ENCODE measurements at regions of chr3 and their contacts with region 1.

Region 1: DNA sequence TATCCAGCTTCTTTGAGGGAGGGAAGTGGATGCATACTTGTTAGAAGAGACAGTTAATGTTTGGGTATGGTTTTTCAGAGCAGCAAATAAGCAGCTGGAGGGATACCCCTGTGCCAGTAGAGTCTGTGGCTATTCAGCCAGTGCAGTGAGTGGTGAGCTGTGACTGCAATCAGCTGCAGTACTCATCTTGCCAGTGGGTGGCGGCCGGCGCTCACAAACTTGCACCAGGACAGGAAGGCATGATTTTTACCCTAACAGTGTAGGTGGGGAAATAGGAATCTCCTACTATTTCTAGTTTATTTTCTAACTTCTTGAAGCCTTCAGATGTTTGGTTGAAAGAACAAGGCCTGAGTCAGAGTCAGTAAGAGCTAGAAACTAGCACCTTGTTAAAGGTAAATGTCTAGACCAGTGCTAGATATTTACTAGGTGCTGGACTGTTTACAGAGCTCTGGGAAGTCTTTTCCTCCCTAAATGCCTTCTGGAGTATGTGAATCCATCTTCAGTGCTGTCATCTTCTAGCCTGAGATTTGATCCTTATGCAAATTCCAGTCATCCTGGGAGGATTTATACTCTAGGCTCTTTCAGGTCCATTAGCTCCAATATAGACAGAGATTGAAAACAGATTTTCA is 23.6 kb downstream of the TIMP4 start:
- DNase-seq: peak; percentile 44
- H3K4me3 Mint-ChIP-seq: no peak overlapping the region
- H3K27ac Mint-ChIP-seq: no peak overlapping the region
- H3K4me1 Mint-ChIP-seq: peaks cover 8% of the 10 kb centered on the region
- H3K27me3 Mint-ChIP-seq: peaks cover 30% of the 10 kb centered on the region

Region 2: GRCh38 chr3:12175844-12176453 is 40.8 kb after region 1 on chr3:
- intact Hi-C with region 1: loop called (anchors 1 kb)
- DNase-seq: no peak
- H3K4me3 Mint-ChIP-seq: no peak overlapping the region
- H3K27ac Mint-ChIP-seq: no peak overlapping the region
- H3K4me1 Mint-ChIP-seq: peaks cover 21% of the 10 kb centered on the region
- H3K27me3 Mint-ChIP-seq: no peaks in the 10 kb centered on the region

Region 3: GRCh38 chr3:12287727-12288191 is 152.6 kb after region 1 on chr3:
- intact Hi-C with region 1: loop called (anchors 1 kb)
- DNase-seq: no peak
- H3K4me3 Mint-ChIP-seq: peak overlapping the region; percentile 76
- H3K27ac Mint-ChIP-seq: peak overlapping the region; percentile 42
- H3K4me1 Mint-ChIP-seq: peaks cover 18% of the 10 kb centered on the region
- H3K27me3 Mint-ChIP-seq: peaks cover 33% of the 10 kb centered on the region

Region 4: DNA sequence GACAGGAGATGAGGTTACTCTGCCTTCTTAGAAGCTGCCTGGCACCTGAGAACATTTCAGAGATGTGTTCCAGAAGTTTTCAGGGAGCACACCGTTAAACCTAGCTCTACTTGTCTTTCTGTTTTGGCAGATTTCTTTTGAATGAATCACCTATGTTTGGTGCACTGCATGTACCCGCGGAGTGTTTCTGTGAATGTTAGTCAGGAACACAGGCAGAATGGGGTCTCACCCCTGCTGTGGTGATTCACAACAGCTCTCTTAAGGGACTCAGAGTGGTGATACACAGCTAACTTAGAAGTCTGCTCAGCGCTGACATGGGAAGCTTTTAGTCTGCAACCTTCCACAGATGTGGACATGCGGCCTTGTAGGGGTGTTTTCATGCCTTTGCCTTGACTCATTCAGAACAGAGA is 373.2 kb after region 1 on chr3:
- intact Hi-C with region 1: no loop called
- DNase-seq: no peak
- H3K4me3 Mint-ChIP-seq: no peak overlapping the region
- H3K27ac Mint-ChIP-seq: no peak overlapping the region
- H3K4me1 Mint-ChIP-seq: no peaks in the 10 kb centered on the region
- H3K27me3 Mint-ChIP-seq: no peaks in the 10 kb centered on the region

Region 5: DNA sequence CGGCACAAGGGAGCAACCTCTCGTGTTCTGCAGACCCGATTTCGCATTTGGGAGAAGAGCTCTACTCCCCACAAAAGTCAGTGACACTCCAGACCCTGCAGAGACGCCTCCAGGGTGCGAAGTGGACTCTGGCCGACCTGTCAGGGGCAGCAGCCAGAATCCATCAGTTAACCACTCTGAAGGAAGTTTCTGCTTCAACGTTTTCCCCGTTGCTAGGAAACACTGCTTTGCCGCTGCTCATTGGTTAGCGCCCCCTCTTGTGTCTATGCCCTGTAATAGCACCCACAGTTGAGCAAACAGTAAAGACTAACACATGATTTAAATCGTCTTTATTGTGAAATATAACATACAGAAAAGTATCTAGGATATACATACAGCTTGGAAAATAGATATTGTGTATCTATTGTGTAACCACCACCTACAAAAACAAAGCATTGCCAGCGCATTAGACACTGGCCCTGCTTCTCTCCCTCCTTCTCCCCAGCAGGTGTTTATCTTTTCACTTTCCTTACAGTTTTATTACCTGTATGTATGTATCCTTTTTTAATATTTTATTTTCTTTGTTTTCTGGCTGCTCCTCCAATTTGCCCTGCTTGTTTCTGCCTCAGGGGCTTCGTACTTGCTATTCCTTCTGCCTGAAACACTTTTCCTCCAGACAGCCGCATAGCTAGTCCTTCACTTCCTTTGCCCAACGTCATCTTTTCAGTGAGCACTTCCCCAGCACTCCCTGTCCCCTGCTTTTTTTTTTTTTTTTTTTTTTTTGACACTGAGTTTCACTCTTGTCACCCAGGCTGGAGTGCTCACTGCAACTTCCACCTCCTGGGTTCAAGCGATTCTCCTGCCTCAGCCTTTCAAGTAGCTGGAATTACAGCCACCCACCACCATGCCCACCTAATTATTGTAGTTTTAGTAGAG is 585.1 kb after region 1 on chr3:
- intact Hi-C with region 1: loop called (anchors 1 kb)
- DNase-seq: peak; percentile 62
- H3K4me3 Mint-ChIP-seq: peak overlapping the region; percentile 35
- H3K27ac Mint-ChIP-seq: no peak overlapping the region
- H3K4me1 Mint-ChIP-seq: peaks cover 8% of the 10 kb centered on the region
- H3K27me3 Mint-ChIP-seq: no peaks in the 10 kb centered on the region

Measured in activated T-helper 2 cell treated with anti-CD3 and anti-CD28 coated beads, Interferon-gamma antibody, Interleukin-2, Interleukin-4, amounts not matched to agents 10 μg/mL and 5 μg/mL and 100 μg/mL, durations not matched to agents 14 hours and 24 hours and 36 hours (primary cell).